Activated T-helper 1 cell treated with anti-CD3 and anti-CD28 coated beads, Interleukin-12 subunit alpha, Interleukin-12 subunit beta, Interleukin-2, Interleukin-4 antibody, amounts not matched to agents 30 ng/mL and 10 ng/mL and 1 ng/mL, durations not matched to agents 14 hours and 24 hours and 36 hours (primary cell): ENCODE measurements at regions of chr5 and their contacts with region 1.

Region 1: DNA sequence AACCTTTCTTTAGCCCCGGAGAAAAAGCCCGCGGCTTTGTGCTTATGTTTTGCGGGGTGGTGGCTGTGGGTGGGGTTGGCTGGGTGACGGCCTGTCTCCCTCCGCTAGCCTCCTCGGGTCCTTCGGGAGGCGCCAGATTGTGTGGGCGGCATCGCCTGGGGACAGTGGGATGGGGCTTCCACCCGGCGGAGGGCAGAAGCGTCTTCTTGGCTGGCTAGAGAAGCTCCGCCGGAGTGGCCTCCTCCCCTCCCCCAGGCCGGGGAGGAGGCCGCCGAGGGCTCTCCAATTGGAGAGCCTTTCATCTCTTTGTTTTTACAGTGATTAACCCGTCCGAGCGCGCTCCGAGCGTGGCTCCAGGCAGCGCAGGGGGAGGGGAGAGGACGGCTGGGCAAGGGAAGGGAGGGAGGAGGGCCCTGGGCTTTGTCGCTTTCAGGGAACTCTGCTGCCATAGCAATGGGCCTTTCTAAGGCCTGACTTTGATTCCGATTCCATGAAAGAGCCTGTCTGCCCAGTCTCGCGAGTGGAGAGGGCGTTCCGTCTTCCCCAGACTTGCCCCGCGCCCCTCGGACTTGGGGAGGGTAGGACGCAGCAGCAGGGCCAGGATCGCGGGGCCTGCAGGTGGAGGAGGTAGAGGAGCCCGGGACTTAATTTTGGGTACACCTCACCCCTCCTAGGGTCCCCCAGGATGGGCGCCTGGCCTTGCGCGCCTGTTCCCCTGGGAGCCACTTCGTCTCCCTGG is 36.7 kb upstream of the TIFAB start:
- DNase-seq: no peak
- H3K4me3 Mint-ChIP-seq: no peak overlapping the region
- H3K27ac Mint-ChIP-seq: no peak overlapping the region
- H3K4me1 Mint-ChIP-seq: peaks cover 4% of the 10 kb centered on the region
- H3K27me3 Mint-ChIP-seq: peaks cover 76% of the 10 kb centered on the region

Region 2: GRCh38 chr5:135535820-135536801 is 47.2 kb after region 1 on chr5 and contains the start of gene NEUROG1:
- intact Hi-C with region 1: loop called (anchors 2 kb)
- DNase-seq: no peak
- H3K4me3 Mint-ChIP-seq: no peak within 1 kb of the TSS
- H3K27ac Mint-ChIP-seq: no peak within 1 kb of the TSS
- H3K4me1 Mint-ChIP-seq: no peaks in the 10 kb centered on the region
- H3K27me3 Mint-ChIP-seq: peaks cover 83% of the 10 kb centered on the region
- total RNA-seq, gene NEUROG1: not detected in 2 replicates

Region 3: DNA sequence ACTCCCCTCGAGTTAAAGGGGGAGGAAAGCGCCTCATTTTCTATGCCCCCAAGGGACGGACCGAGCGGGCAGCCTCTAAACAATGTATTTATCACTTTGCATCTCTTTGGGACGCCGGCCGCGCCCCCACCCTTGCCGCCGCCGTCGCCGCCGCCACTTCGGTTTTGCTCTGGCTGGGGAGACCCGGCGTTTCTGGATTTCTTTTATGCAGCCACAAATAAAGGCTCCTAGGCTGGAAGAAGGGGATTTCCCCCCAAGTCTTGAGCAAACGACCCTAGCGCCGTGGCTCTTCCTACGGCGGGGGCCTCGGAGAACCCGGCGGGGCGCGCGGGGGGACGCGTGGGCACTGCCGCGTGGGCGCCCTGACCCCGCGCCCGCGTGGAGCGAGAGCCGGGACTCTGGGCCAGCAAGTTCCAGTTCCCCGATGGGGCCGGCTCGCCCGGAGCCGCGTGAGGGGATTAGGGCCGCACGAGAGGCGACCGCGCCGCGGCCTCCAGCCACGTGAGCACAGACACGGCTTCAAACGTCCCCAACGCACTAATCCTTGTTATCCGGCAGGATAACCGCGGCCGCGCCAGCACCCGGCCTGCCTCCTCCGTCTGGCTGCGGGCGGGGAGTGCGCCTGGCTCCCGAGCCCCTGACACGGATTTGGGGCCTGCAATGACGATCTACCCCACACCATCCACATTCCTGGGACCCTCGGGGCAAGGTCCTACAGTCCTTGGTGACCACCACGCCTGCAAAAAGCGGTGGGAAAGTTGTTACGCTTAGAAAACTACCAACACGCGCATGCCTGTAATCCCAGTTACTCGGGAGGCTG is 54.8 kb after region 1 on chr5:
- intact Hi-C with region 1: loop called (anchors 2 kb)
- DNase-seq: no peak
- H3K4me3 Mint-ChIP-seq: peak overlapping the region; percentile 87
- H3K27ac Mint-ChIP-seq: no peak overlapping the region
- H3K4me1 Mint-ChIP-seq: peaks cover 10% of the 10 kb centered on the region
- H3K27me3 Mint-ChIP-seq: peaks cover 80% of the 10 kb centered on the region